Natural killer cell (primary cell): ENCODE measurements at regions of chr9 and their contacts with region 1.

Region 1: GRCh38 chr9:131349881-131350563 is 43.9 kb upstream of the PRRC2B start:
- DNase-seq: peak; percentile 80 to 91
- ATAC-seq: peak; percentile 91 to 99 (median 98)
- H3K4me3 ChIP-seq: no peak overlapping the region
- H3K4me3 Mint-ChIP-seq: no peak overlapping the region
- H3K27ac ChIP-seq: no peak overlapping the region
- H3K27ac Mint-ChIP-seq: no peak overlapping the region
- H3K4me1 ChIP-seq: peaks cover 8% of the 10 kb centered on the region
- H3K4me1 Mint-ChIP-seq: peaks cover 0 to 8% of the 10 kb centered on the region in 2 donors
- H3K27me3 ChIP-seq: no peaks in the 10 kb centered on the region
- H3K27me3 Mint-ChIP-seq: peaks cover 0 to 3% of the 10 kb centered on the region in 2 donors
- CTCF ChIP-seq: peak; percentile 80

Region 2: DNA sequence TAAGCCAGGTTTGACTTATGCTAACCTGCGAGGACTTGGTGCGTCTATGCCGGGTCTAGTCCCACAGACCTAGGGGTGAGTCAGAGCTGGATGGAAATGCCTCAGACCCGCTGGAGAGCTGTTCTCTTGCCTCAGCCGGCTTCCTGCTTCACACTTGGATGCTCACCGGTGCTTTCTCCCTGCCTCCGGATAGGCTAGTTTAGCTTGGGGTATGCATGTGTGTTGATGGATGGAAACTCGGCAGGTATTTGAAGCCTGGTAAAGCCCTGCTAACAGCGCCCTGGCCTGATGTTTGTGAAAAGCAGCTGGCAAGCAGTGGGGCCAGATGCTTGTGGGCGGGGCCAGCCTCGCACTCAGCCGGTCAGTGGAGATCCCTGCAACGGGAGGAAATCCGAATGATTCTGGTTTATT is 73.2 kb after region 1 on chr9:
- intact Hi-C with region 1: loop called (anchors 5 kb)
- DNase-seq: no peak
- ATAC-seq: no peak
- H3K4me3 ChIP-seq: no peak overlapping the region
- H3K4me3 Mint-ChIP-seq: no peak overlapping the region
- H3K27ac ChIP-seq: no peak overlapping the region
- H3K27ac Mint-ChIP-seq: peak overlapping the region; percentile 41 to 66
- H3K4me1 ChIP-seq: peaks cover 71% of the 10 kb centered on the region
- H3K4me1 Mint-ChIP-seq: peaks cover 66 to 76% of the 10 kb centered on the region in 2 donors
- H3K27me3 ChIP-seq: no peaks in the 10 kb centered on the region
- H3K27me3 Mint-ChIP-seq: no peaks in the 10 kb centered on the region
- CTCF ChIP-seq: no peak

Region 3: DNA sequence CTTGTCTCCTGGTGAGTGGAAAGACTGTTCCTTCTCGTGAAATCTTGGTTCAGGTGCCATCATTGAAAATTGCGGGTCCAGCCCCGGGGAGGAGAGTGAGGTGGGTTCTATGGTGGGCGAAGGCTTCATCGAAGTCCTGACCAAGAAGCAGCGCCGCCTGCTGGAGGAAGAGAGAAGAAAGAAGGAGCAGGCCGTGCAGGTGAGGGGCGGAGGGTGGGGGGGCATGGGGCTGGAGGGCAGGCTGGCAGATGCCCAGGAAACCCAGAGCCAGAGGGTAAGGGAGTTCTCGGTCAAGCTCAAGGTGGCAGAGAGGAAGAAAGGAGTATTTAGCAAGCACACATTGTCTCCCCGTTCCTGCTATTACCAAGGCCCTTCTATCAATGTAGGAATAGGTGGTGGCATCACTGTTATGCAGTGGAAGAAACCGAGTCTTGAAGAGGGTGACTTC is 128.4 kb after region 1 on chr9:
- intact Hi-C with region 1: loop called (anchors 1 kb)
- DNase-seq: peak; percentile 47 to 77
- ATAC-seq: peak in 2 of 3 donors; percentile 45 to 68
- H3K4me3 ChIP-seq: no peak overlapping the region
- H3K4me3 Mint-ChIP-seq: no peak overlapping the region
- H3K27ac ChIP-seq: no peak overlapping the region
- H3K27ac Mint-ChIP-seq: peak overlapping the region in 1 of 2 donors; percentile 65
- H3K4me1 ChIP-seq: no peaks in the 10 kb centered on the region
- H3K4me1 Mint-ChIP-seq: peaks cover 0 to 17% of the 10 kb centered on the region in 2 donors
- H3K27me3 ChIP-seq: no peaks in the 10 kb centered on the region
- H3K27me3 Mint-ChIP-seq: no peaks in the 10 kb centered on the region
- CTCF ChIP-seq: peak; percentile 62

Region 4: GRCh38 chr9:131747356-131747755 is 397.3 kb after region 1 on chr9:
- intact Hi-C with region 1: loop called (anchors 1 kb)
- DNase-seq: peak in 1 of 2 donors; percentile 77
- ATAC-seq: peak; percentile 74 to 84 (median 76)
- H3K4me3 ChIP-seq: no peak overlapping the region
- H3K4me3 Mint-ChIP-seq: no peak overlapping the region
- H3K27ac ChIP-seq: no peak overlapping the region
- H3K27ac Mint-ChIP-seq: no peak overlapping the region
- H3K4me1 ChIP-seq: peaks cover 14% of the 10 kb centered on the region
- H3K4me1 Mint-ChIP-seq: peaks cover 5 to 11% of the 10 kb centered on the region in 2 donors
- H3K27me3 ChIP-seq: no peaks in the 10 kb centered on the region
- H3K27me3 Mint-ChIP-seq: peaks cover 0 to under 1% of the 10 kb centered on the region in 2 donors
- CTCF ChIP-seq: peak; percentile 55